Left cardiac atrium (tissue), 4 donors: ENCODE measurements at regions of chr4 and their contacts with region 1.

Region 1: DNA sequence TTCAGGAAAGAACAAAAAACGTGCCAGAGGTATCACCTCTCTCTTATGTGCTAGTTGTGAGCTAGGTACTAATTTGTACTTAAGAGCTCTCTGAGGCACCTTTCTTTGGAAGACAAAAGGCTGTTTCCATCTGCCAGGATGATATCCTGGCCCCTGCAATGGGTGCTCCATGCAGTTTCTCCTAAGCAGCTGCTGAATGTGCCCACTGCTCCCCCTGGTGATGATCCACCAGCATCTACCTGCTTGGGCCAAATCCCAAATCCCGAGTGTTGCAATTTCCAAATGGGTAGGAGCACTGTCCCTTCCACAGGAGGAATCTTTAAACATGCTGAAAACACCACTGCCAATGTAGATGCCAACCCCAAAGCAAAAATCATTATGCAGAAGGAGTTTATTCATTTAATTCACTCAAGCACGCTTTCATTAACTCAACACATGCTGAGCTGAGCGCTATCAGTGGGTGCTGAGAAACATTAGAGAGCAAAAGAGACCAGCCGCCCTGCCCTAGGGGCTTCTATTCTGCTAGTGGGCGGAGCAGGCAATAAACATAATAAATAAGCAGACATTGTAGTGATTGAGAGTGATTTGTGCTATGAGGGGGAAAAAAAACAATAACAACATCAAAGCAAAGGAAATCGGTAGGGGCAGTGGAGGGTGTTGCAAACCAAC is 69.6 kb upstream of the C4orf50 start:
- DNase-seq: peak; percentile 36
- ATAC-seq: peak in 1 of 2 donors; percentile 40

Region 2: GRCh38 chr4:5812506-5813229 is 275.1 kb before region 1 on chr4:
- intact Hi-C with region 1: no loop called
- DNase-seq: no peak
- ATAC-seq: peak; percentile 68 to 81

Region 3: GRCh38 chr4:5863461-5864113 is 224.2 kb before region 1 on chr4:
- intact Hi-C with region 1: no loop called
- DNase-seq: no peak
- ATAC-seq: peak in 1 of 2 donors; percentile 68

Region 4: DNA sequence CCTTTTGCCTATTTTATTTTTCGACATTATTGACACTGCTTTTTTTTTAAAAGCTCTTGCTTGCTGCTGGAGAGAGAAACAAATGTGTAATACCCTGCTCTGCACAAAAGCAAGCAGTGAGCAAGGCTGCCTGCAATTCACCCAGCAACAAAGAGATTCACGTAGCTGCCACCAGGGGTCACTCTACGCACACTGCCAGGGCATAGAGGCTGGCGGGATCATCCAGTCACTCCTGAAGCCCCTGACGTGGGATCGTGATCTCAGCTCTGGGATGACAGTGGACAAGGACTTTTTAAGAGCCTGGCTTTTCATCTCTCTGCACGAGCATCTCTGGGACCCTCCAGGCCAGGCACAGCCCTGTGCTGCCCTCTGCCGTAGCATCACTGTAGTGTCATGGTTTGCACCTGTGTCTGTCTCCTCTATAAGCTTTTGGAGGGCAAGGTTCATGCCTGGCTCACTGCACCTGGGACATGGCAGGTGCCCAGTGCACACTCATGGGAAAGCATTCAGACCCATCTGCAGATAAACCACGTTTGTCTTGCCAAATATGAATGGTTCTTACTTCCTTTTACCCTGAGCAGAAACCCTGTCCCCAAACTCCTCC is 89.4 kb before region 1 on chr4:
- intact Hi-C with region 1: loop called in 1 of 2 experiments (anchors 2 kb)
- DNase-seq: peak; percentile 41
- ATAC-seq: peak; percentile 80 to 81

Region 5: DNA sequence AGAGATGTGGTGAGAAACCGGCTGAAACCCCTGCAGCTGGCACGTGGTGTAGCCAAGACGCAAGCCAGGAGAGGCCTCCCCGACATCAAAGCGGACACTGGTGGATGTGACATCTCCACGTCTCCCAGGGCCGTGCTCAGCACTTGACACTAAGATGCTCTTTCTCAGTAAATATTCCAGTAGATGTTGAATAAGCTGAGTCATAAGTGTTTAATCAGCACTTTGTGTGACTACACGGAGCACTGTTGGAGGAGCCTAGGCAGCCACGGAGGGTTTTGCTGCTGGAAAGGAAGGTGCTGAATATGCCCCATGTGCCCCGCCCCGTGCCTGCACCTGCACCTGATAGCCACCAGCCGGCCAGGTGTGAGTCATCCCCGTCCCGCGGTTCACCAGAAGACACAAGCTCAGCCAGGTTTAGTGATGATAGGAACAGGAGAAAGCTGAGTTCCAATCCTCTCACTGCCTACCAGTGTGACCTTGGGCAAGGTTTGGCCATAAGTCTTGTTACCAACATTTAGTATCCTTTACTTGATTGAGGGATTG is 40.6 kb before region 1 on chr4:
- intact Hi-C with region 1: no loop called
- DNase-seq: no peak
- ATAC-seq: no peak